ENCODE measurements at regions of chr3 and their contacts with region 1.

Region 1: DNA sequence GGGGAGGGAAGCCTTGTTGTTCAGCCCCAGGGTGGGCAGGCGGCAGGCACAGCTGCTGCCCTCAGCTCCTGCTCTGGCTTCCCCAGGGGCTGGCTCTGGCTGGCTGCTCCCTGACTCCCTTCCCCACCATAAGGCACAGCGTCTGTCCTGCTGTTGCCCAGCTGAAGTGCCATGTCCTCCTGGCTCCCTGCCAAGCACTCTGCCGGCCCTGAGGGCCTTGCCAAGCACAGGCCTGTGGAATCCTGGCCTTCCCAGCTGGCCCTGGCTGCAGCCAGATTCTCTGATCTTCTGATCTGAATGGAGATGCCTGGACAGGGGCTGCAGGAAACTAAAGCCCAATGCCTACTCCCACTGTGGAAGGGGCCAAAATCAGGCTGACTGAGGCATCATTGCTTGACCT is 1.1 kb downstream of the IQCF6 start:
- DNase-seq: peak; percentile 4

Region 2: DNA sequence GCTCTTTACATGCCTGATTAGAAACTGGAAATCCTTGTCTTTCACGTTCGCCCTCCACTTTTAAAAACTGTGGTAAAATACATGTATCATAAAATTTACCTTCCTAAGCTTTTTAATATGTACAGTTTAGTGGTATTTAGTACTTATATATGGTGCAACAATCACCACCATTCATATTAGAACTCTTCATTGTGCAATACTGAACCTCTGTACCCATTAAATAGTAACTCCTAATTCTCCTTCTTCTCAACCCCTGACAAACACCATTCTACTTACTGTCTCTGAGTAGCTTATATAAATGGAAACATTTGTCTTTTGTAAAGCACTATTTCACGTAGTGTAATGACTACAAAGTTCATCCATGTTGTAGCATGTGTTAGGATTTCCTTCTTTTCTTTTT is 42.9 kb before region 1 on chr3:
- in situ Hi-C with region 1: loop called (anchors 5 kb)
- DNase-seq: no peak

Measured in G401 (cell line).